ENCODE measurements at regions of chr14 and their contacts with region 1.

Region 1: DNA sequence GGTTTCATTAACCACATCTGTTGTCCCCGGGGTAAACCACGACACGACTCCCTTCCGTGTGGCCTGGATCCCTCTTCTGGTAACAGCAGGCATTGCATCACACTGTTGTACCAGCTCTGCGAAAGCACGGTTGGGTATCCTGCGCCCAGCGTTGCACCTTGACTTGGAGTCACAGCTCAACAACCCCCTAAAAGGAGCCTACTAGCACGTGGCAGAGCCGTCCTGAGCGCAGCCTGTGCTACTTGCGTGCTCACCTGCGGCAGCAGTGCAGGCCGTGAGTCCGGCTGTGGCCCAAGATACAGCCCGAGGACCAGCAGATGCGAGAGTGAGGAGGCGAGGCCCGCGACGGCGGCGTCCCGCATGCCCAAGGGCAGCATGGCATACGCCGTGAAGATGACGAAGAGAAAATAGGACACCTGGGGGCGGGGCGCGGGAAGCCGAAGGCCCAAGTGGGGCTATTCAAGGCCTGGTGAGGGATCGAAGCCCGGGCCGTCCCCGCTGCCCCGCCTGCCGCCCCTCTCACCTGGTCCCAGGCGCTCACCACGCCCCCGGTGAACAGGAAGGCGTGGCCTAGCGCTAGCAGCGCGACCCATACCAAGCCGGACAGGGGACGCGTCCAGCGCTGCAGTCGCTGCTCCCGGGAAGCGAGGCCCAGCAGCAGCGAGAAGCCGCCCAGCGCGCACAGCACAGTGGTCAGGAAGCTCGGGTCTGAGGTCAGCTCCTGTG is 2.4 kb downstream of the ADCY4 start:
- DNase-seq: peak; percentile 74 to 95 (median 84)
- ATAC-seq: peak; percentile 87
- H3K4me3 ChIP-seq: peak overlapping the region; percentile 43 to 48
- H3K4me3 Mint-ChIP-seq: peak overlapping the region; percentile 88
- H3K27ac ChIP-seq: no peak overlapping the region
- H3K27ac Mint-ChIP-seq: peak overlapping the region; percentile 70
- H3K4me1 ChIP-seq: peaks cover 60% of the 10 kb centered on the region
- H3K4me1 Mint-ChIP-seq: peaks cover 66% of the 10 kb centered on the region
- H3K27me3 ChIP-seq: peaks cover 7 to 23% of the 10 kb centered on the region in 2 experiments
- H3K27me3 Mint-ChIP-seq: peaks cover 26% of the 10 kb centered on the region
- CTCF ChIP-seq: peak; percentile 76

Region 2: GRCh38 chr14:24195191-24196070 is 137.0 kb before region 1 on chr14 and contains the start of gene TM9SF1:
- CTCF ChIA-PET with region 1: interaction called, 4 read pairs
- POLR2A ChIA-PET with region 1: no interaction called
- intact Hi-C with region 1: loop called in 1 of 2 experiments (anchors 1 kb)
- DNase-seq: peak; percentile 81 to 96 (median 91)
- ATAC-seq: peak; percentile 83
- H3K4me3 ChIP-seq: peak within 1 kb of the TSS; percentile 87 to 94
- H3K4me3 Mint-ChIP-seq: peak within 1 kb of the TSS; percentile 94
- H3K27ac ChIP-seq: peak within 1 kb of the TSS; percentile 99 to 100
- H3K27ac Mint-ChIP-seq: peak within 1 kb of the TSS; percentile 98
- H3K4me1 ChIP-seq: peaks cover 31% of the 10 kb centered on the region
- H3K4me1 Mint-ChIP-seq: peaks cover 50% of the 10 kb centered on the region
- H3K27me3 ChIP-seq: no peaks in the 10 kb centered on the region
- H3K27me3 Mint-ChIP-seq: no peaks in the 10 kb centered on the region
- CTCF ChIP-seq: no peak
- total RNA-seq, gene TM9SF1: 17.5 to 20.4 TPM

Region 3: GRCh38 chr14:24271134-24271833 is 61.1 kb before region 1 on chr14 and contains the start of gene RABGGTA:
- CTCF ChIA-PET with region 1: interaction called, 5 read pairs
- POLR2A ChIA-PET with region 1: no interaction called
- intact Hi-C with region 1: loop called in 1 of 2 experiments (anchors 1 kb)
- DNase-seq: peak; percentile 85 to 99 (median 91)
- ATAC-seq: peak; percentile 84
- H3K4me3 ChIP-seq: peak within 1 kb of the TSS; percentile 81 to 90
- H3K4me3 Mint-ChIP-seq: peak within 1 kb of the TSS; percentile 91
- H3K27ac ChIP-seq: peak within 1 kb of the TSS; percentile 93 to 97
- H3K27ac Mint-ChIP-seq: peak within 1 kb of the TSS; percentile 98
- H3K4me1 ChIP-seq: peaks cover 31% of the 10 kb centered on the region
- H3K4me1 Mint-ChIP-seq: peaks cover 36% of the 10 kb centered on the region
- H3K27me3 ChIP-seq: no peaks in the 10 kb centered on the region
- H3K27me3 Mint-ChIP-seq: no peaks in the 10 kb centered on the region
- CTCF ChIP-seq: peak; percentile 50
- total RNA-seq, gene RABGGTA: 59.1 to 65.9 TPM

Region 4: DNA sequence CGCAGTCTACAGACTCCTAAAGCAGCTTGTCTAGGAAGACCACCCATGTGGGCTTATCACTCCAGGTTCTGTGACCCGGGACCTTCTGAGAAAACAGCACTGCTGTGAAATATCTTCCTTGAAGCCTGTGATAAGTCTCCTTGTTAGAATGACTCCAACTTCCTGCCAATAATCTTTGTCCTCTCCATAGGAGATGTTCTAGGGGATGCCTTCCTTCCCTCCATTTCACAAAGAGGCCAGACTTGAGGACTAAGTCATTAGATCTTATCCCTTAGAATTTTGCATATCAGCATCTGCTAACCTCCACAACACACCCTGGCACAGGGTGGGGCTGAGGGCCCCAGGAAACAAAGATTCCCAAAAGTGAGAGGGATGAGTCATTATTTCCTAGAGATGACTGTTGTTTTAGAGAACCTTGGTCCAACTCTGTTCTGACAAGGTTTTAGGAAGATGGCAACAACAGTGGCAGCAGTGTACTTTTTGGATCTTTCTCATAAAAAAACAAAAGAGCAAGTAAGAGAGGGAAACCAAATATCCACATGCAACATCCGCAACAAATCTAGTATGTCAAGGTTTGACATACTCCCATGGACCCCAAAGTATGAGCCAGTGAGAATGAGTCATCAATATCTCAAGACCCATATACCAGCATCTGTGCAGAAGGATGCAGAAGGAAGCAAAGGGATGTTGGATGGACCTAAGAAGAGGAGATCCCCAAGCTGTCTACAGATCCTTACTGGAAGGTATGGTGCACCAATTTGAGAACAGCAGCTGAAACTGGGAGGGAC is 15.1 kb before region 1 on chr14:
- CTCF ChIA-PET with region 1: interaction called, 192 read pairs
- POLR2A ChIA-PET with region 1: interaction called, 4 read pairs
- intact Hi-C with region 1: no loop called
- DNase-seq: no peak
- ATAC-seq: no peak
- H3K4me3 ChIP-seq: no peak overlapping the region
- H3K4me3 Mint-ChIP-seq: no peak overlapping the region
- H3K27ac ChIP-seq: no peak overlapping the region
- H3K27ac Mint-ChIP-seq: no peak overlapping the region
- H3K4me1 ChIP-seq: peaks cover 29% of the 10 kb centered on the region
- H3K4me1 Mint-ChIP-seq: peaks cover 34% of the 10 kb centered on the region
- H3K27me3 ChIP-seq: no peaks in the 10 kb centered on the region
- H3K27me3 Mint-ChIP-seq: peaks cover 4% of the 10 kb centered on the region
- CTCF ChIP-seq: no peak

Region 5: GRCh38 chr14:24366721-24367513 is 34.5 kb after region 1 on chr14:
- CTCF ChIA-PET with region 1: interaction called, 23 read pairs
- POLR2A ChIA-PET with region 1: no interaction called
- intact Hi-C with region 1: no loop called
- DNase-seq: peak in 6 of 9 experiments; percentile 21 to 53 (median 34)
- ATAC-seq: peak; percentile 32
- H3K4me3 ChIP-seq: peak overlapping the region; percentile 22 to 41
- H3K4me3 Mint-ChIP-seq: peak overlapping the region; percentile 71
- H3K27ac ChIP-seq: no peak overlapping the region
- H3K27ac Mint-ChIP-seq: no peak overlapping the region
- H3K4me1 ChIP-seq: peaks cover 35% of the 10 kb centered on the region
- H3K4me1 Mint-ChIP-seq: peaks cover 30% of the 10 kb centered on the region
- H3K27me3 ChIP-seq: peaks cover 40 to 43% of the 10 kb centered on the region in 2 experiments
- H3K27me3 Mint-ChIP-seq: peaks cover 45% of the 10 kb centered on the region
- CTCF ChIP-seq: no peak

Region 6: GRCh38 chr14:24425704-24426103 is 93.3 kb after region 1 on chr14:
- CTCF ChIA-PET with region 1: interaction called, 442 read pairs
- POLR2A ChIA-PET with region 1: interaction called, 75 read pairs
- intact Hi-C with region 1: no loop called
- DNase-seq: peak in 1 of 9 experiments; percentile 23
- ATAC-seq: no peak
- H3K4me3 ChIP-seq: no peak overlapping the region
- H3K4me3 Mint-ChIP-seq: no peak overlapping the region
- H3K27ac ChIP-seq: no peak overlapping the region
- H3K27ac Mint-ChIP-seq: peak overlapping the region; percentile 0
- H3K4me1 ChIP-seq: peaks cover 29% of the 10 kb centered on the region
- H3K4me1 Mint-ChIP-seq: peaks cover 30% of the 10 kb centered on the region
- H3K27me3 ChIP-seq: peaks cover 0 to 2% of the 10 kb centered on the region in 2 experiments
- H3K27me3 Mint-ChIP-seq: no peaks in the 10 kb centered on the region
- CTCF ChIP-seq: no peak

Region 7: GRCh38 chr14:24678801-24679247 is 346.4 kb after region 1 on chr14:
- CTCF ChIA-PET with region 1: no interaction called
- POLR2A ChIA-PET with region 1: no interaction called
- intact Hi-C with region 1: loop called (anchors 10 kb)
- DNase-seq: peak; percentile 49 to 94 (median 78)
- ATAC-seq: peak; percentile 82
- H3K4me3 ChIP-seq: peak overlapping the region; percentile 34 to 57
- H3K4me3 Mint-ChIP-seq: peak overlapping the region; percentile 84
- H3K27ac ChIP-seq: peak overlapping the region in 1 of 2 experiments; percentile 78
- H3K27ac Mint-ChIP-seq: peak overlapping the region; percentile 78
- H3K4me1 ChIP-seq: peaks cover 22% of the 10 kb centered on the region
- H3K4me1 Mint-ChIP-seq: peaks cover 60% of the 10 kb centered on the region
- H3K27me3 ChIP-seq: no peaks in the 10 kb centered on the region
- H3K27me3 Mint-ChIP-seq: no peaks in the 10 kb centered on the region
- CTCF ChIP-seq: peak; percentile 99

Measured in CD8-positive, alpha-beta T cell (primary cell).